Naive thymus-derived CD8-positive, alpha-beta T cell (primary cell): ENCODE measurements at regions of chr1 and their contacts with region 1.

Region 1: DNA sequence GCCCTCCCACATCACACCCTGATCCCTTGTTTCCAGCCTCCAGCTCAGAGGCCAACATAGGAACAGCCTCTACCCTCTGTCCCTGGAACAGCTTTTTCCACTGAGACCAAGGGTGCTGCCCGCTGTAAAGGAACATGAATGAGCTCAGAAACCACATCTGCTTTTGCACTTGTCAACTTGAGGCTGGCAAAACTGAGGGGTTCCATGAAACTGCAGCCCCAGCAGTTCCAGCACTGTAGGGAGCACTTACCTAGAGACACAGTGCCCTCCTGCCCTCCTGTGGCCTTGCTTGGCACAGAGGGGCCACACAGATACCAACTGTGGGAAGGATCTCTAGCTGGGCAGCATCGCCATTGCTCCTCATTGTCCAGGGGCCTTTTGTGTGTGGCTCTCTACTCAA is 51.7 kb downstream of the ITPKB start:
- DNase-seq: peak in 6 of 10 donors; percentile 43 to 78 (median 62)
- ATAC-seq: peak; percentile 21 to 23
- H3K4me3 Mint-ChIP-seq: peak overlapping the region; percentile 4 to 82 (median 66)
- H3K27ac Mint-ChIP-seq: peak overlapping the region; percentile 98 to 100 (median 99)
- H3K4me1 Mint-ChIP-seq: peaks cover 73 to 100% (median 100%) of the 10 kb centered on the region in 4 donors
- H3K27me3 Mint-ChIP-seq: no peaks in the 10 kb centered on the region

Region 2: DNA sequence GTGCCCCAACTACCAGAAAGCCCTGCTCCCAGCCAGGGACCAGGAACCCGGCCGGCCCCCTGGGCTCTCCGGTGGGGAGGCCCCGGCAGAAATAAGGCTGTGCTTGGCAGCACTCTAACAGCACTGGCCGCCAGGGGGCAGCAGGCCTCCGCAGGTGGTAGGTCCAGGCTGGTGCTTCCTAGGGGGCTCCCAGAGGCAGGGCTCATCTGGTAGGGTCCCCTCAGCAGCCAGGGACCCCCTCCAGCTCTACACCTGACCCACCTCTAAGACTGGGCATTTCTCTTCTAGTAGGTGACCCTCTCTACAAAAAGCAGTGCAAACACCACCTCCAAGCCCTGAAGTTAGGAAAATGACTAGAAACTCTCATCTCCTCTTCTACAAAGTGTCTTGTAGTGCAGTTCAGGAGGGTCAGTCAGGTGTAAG is 53.2 kb before region 1 on chr1:
- POLR2A ChIA-PET with region 1: interaction called, 13 read pairs
- DNase-seq: peak; percentile 64 to 89 (median 82)
- ATAC-seq: peak; percentile 65 to 85
- H3K4me3 Mint-ChIP-seq: peak overlapping the region; percentile 3 to 86 (median 56)
- H3K27ac Mint-ChIP-seq: peak overlapping the region; percentile 72 to 97 (median 90)
- H3K4me1 Mint-ChIP-seq: peaks cover 34 to 64% (median 57%) of the 10 kb centered on the region in 4 donors
- H3K27me3 Mint-ChIP-seq: no peaks in the 10 kb centered on the region

Region 3: DNA sequence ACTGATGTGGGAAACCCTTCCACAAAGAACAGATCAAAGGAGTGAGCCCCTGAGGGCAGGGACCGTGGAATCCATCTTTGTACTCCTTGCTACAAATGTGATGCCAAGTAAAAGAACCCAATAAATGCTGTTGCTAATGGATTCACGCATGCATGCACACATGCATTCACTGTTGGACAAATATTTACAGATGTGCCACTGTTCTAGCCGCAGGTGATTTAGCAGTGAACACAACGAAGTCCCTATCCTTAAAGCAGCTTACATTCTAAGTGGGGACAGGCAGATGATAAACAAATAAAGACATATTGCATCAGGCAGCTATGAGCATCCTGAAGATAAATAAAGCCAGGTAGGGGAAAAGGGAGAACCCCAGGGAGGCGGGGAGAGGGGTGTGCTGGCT is 16.1 kb before region 1 on chr1:
- POLR2A ChIA-PET with region 1: interaction called, 613 read pairs
- DNase-seq: no peak
- ATAC-seq: no peak
- H3K4me3 Mint-ChIP-seq: peak overlapping the region in 9 of 10 donors; percentile 48 to 80 (median 74)
- H3K27ac Mint-ChIP-seq: peak overlapping the region; percentile 87 to 100 (median 99)
- H3K4me1 Mint-ChIP-seq: peaks cover 60 to 66% (median 64%) of the 10 kb centered on the region in 4 donors
- H3K27me3 Mint-ChIP-seq: no peaks in the 10 kb centered on the region

Region 4: DNA sequence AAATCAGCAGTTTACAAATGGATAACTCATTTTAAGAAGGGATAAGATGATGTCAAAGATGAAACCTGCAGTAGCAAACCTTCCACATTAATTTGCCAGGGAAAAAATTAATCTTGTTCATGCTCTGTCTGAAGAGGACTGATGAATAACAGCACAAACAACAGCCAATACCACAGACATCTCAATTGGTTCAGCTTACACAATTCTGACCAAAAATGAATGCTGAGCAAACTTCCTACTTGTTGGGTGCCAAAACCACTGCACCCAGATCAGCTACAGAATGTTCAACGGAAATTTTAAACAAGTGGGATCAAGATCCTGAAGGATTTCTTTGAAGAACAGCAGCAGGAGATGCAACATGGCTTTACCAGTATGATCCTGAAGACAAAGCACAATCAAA is 351.0 kb after region 1 on chr1:
- POLR2A ChIA-PET with region 1: no interaction called
- DNase-seq: no peak
- ATAC-seq: no peak
- H3K4me3 Mint-ChIP-seq: no peak overlapping the region
- H3K27ac Mint-ChIP-seq: no peak overlapping the region
- H3K4me1 Mint-ChIP-seq: peaks cover 4 to 8% (median 6%) of the 10 kb centered on the region in 4 donors
- H3K27me3 Mint-ChIP-seq: peaks cover 0 to 10% (median 0%) of the 10 kb centered on the region in 5 donors